Cardiac septum (tissue), 1 donor: ENCODE measurements at regions of chr2 and their contacts with region 1.

Region 1: GRCh38 chr2:236512902-236513435 is 56.7 kb upstream of the ACKR3 start:
- DNase-seq: no peak

Region 2: GRCh38 chr2:236286873-236287545 is 226.0 kb before region 1 on chr2:
- intact Hi-C with region 1: no loop called
- DNase-seq: no peak

Region 3: DNA sequence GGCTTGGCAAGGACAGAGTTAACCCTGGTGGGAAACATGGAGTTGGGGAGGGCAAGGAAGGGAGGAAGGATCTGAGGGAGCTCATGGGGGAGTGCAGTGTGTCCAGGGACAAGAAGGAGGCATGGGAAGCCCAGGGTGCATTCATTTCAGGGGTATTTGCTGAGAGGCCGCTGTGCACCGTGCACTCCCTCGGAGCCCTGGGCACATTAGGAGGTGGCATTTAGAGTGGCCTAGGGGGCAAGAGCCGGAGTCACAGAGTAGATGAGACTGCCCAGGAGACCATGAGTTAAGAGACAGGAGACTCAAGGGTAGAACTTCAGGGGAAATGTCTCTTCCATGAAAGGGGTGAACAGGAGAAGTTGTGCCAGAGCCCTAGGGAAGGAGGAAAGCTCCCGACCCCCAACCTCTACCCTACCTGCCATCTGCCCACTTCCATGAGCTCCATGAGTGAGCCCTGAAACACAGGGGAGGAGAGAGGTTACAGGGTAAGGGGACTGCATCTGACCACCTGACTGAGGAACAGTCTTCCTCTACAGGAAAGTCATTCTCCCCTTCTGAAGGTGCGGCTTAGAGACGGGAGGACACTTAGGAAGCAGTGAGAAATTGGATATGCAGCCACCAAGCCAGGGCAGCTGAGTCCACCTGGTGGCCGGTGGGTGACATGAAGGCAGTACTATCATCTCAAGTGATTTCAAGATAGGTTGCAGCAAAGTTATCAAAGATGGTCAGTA is 514.2 kb after region 1 on chr2:
- intact Hi-C with region 1: loop called (anchors 2 kb)
- DNase-seq: peak; percentile 82